Activated naive CD4-positive, alpha-beta T cell treated with anti-CD3 and anti-CD28 coated beads for 36 hours (primary cell): ENCODE measurements at regions of chr6 and their contacts with region 1.

Region 1: DNA sequence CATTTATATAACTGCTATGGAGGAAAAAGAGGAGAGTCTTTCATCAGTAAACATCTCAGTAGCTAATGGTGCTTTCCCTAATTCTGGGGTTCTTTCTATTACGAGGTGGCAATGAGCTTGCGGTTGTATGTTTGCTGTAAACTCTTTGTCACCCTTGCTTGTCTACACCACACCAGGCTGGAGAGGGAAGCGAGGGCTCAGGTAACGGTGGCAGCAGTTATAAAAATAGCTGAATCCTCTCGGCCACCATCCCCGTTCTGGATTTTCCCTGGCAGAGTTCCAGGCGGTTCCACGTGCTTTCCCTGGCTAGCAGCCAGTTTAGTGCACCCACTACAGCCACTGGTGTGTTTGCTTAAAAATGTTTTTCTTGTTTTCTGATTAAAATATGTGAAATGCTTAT is 39.0 kb downstream of the MAS1 start:
- DNase-seq: peak; percentile 49
- H3K4me3 Mint-ChIP-seq: no peak overlapping the region
- H3K27ac Mint-ChIP-seq: no peak overlapping the region
- H3K4me1 Mint-ChIP-seq: peaks cover 31% of the 10 kb centered on the region
- H3K27me3 Mint-ChIP-seq: peaks cover 3% of the 10 kb centered on the region

Region 2: DNA sequence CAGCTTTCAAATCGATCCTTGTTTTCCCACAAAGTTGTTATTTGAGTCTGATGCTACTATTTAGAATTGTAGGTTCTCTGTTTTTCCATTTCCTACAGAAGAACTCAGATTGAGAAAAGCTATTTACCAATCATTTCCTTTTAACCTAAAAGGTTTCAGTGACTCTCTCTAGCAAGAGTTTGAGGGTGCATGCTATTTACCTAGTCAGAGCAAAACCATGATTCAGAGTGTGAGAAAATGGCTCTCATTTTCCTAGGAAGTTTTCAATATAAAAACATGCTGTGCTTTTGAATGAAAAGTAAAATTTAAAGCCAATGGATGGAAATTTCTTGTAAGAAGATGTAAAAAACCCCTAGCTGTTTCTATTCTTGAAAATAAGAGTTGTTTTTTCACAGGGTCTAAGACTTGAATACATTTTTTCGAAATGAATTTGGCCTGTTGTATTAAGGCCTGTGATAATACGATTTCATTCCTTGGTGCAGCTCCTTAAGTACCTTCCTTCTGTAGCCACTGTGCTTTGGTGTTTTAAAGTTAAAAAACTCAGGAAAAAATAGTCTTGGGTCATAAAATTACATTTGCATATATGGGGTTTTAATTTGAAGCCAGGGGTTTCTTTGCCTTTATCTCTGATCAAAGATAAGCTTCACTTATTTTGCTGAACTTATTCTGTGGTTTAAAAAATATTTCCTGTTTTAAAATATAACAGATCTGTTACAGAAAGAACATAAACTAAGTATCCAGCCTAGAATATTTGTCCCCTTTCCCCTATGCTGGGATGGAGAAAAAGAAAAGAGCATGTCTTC is 911.9 kb before region 1 on chr6:
- CTCF ChIA-PET with region 1: no interaction called
- intact Hi-C with region 1: loop called (anchors 2 kb)
- DNase-seq: no peak
- H3K4me3 Mint-ChIP-seq: no peak overlapping the region
- H3K27ac Mint-ChIP-seq: peak overlapping the region; percentile 68
- H3K4me1 Mint-ChIP-seq: peaks cover 47% of the 10 kb centered on the region
- H3K27me3 Mint-ChIP-seq: no peaks in the 10 kb centered on the region

Region 3: DNA sequence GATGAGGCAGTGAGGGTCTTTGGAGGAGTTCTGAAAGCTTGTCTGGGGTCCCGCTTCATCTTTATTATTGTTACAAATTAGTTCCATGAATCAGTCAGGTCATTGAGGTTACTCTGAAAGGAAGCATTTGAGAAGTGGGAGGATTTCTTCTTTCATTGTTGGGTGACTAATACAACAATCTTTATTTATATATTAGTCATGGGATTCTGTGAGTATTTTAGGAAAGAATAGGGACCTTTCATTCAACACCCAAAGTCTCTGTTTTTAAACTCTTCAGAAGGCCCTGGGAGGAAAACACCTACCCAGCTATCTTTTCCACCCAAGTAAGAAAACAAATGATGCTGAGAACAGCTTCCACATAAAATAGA is 335.1 kb before region 1 on chr6:
- CTCF ChIA-PET with region 1: no interaction called
- intact Hi-C with region 1: loop called (anchors 1 kb)
- DNase-seq: no peak
- H3K4me3 Mint-ChIP-seq: no peak overlapping the region
- H3K27ac Mint-ChIP-seq: peak overlapping the region; percentile 13
- H3K4me1 Mint-ChIP-seq: peaks cover 15% of the 10 kb centered on the region
- H3K27me3 Mint-ChIP-seq: no peaks in the 10 kb centered on the region

Region 4: DNA sequence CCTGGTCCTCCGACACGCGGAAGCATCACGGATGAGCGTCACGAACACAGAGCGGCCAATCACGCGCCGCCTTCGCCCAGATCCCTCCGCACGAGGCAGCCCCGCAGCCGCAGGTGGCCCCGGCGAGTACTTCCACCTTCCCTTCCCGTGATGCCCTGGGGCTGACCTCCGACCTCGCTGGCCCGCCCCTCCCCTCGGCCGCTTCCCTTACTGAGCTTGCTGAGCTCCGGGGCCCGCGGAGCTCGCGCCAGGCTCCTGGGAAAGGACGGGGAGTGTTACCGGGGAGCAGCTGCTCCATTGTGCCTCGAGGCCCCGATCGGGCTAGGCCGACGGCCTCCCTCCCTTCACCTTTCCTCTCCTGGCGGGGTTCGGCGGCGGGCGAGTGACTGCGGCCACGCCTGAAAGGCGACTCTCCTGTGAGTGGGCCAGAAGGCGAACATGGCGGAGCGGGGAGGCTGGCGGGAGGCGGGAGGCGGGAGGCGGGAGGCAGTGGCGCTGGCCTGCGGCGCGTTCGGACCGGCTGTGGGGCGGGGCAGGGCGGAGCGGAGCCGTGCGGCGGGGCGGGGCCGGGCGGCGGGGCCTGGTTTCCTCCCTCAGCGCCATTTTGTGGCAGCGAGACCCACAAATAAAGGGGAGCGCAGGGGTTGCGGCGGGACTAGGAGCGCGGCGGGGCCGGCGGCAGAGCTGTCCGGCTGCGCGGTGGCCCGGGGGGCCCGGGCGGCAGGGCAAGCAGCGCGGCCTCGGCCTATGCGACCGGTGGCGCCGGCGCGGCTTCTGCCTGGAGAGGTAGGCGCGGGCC is 202.7 kb before region 1 on chr6 and contains the start of gene WTAP:
- CTCF ChIA-PET with region 1: no interaction called
- intact Hi-C with region 1: loop called (anchors 1 kb)
- DNase-seq: peak; percentile 98
- H3K4me3 Mint-ChIP-seq: peak within 1 kb of the TSS; percentile 91
- H3K27ac Mint-ChIP-seq: peak within 1 kb of the TSS; percentile 95
- H3K4me1 Mint-ChIP-seq: peaks cover 50% of the 10 kb centered on the region
- H3K27me3 Mint-ChIP-seq: no peaks in the 10 kb centered on the region
- total RNA-seq, gene WTAP: 87.5 to 91.6 TPM

Region 5: GRCh38 chr6:159968440-159969203 is 38.8 kb after region 1 on chr6 and contains the start of gene IGF2R:
- CTCF ChIA-PET with region 1: interaction called, 3 read pairs
- intact Hi-C with region 1: loop called (anchors 1 kb)
- DNase-seq: peak; percentile 94
- H3K4me3 Mint-ChIP-seq: peak within 1 kb of the TSS; percentile 87
- H3K27ac Mint-ChIP-seq: peak within 1 kb of the TSS; percentile 87
- H3K4me1 Mint-ChIP-seq: peaks cover 36% of the 10 kb centered on the region
- H3K27me3 Mint-ChIP-seq: no peaks in the 10 kb centered on the region
- total RNA-seq, gene IGF2R: 42.1 to 44.5 TPM

Region 6: DNA sequence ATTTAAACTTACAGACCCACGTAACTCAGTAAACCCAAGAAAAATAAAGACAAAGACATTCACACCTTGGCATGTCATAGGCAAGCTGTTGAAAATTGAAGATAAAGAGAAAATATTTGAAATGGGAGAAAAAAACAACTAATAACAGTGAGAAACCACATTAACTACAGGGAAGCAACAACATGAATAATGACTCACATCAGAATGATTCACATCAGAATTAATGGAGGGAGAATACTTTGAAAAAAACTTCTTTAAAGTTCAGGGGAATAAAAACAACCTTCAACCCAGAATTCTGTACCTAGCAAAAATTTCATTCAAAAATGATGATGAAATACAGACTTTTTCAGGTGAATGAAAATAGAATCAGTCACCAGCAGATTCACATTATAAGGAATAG is 385.5 kb after region 1 on chr6:
- CTCF ChIA-PET with region 1: no interaction called
- intact Hi-C with region 1: no loop called
- DNase-seq: no peak
- H3K4me3 Mint-ChIP-seq: no peak overlapping the region
- H3K27ac Mint-ChIP-seq: no peak overlapping the region
- H3K4me1 Mint-ChIP-seq: no peaks in the 10 kb centered on the region
- H3K27me3 Mint-ChIP-seq: peaks cover 7% of the 10 kb centered on the region

Region 7: DNA sequence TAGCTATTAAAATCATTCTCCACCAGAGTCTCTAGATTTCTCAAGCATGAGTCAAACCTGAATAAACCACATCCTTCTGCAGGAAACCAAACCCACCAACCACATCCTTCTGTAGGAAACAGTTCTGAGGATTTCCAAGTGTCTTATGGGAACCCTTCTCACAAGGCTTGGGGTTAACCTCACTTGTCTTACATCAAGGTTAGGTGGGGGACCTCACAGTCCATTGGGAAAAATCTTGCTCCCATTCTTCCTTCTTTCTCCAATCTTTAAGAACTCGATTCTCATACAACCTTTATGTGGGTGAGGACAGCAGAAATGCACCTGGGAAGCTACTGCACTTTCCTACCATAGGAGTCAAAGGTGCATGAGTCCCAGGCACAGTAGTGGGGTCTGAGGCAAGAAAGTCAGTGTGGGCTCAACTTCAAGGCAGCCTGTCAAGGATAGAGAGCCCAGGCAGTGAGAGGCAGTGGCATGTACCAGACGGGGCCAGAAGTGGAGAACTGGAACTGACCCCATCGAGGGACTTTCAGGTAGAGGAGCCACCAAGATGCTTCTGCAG is 532.8 kb after region 1 on chr6:
- CTCF ChIA-PET with region 1: no interaction called
- intact Hi-C with region 1: loop called (anchors 1 kb)
- DNase-seq: peak; percentile 79
- H3K4me3 Mint-ChIP-seq: no peak overlapping the region
- H3K27ac Mint-ChIP-seq: peak overlapping the region; percentile 50
- H3K4me1 Mint-ChIP-seq: peaks cover 53% of the 10 kb centered on the region
- H3K27me3 Mint-ChIP-seq: peaks cover 3% of the 10 kb centered on the region